Calu3 (cell line): ENCODE measurements at regions of chr3 and their contacts with region 1.

Region 1: DNA sequence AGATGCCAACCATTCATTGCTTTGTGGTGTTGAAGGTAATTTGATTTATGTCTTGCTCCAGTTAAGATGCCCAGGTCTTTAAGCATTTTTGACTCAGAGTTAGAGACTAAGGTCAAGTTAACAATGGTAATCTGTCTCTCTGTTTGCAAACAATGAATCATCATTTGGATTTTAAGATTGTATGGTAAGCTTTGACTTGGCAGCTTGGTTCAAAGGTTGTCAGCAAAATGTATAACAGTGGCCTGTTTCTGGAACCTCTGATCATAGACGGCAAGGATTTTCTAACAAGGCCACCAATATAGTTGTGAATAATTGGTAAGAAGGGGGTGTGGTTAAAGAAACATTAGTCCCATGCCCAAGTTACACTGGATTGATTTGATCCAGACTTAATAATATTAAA is 775.1 kb upstream of the GOLIM4 start:
- DNase-seq: peak; percentile 41
- H3K4me3 Mint-ChIP-seq: peak overlapping the region; percentile 20
- H3K27ac Mint-ChIP-seq: peak overlapping the region; percentile 78
- H3K4me1 Mint-ChIP-seq: peaks cover 86% of the 10 kb centered on the region
- H3K27me3 Mint-ChIP-seq: no peaks in the 10 kb centered on the region
- CTCF ChIP-seq: no peak

Region 2: DNA sequence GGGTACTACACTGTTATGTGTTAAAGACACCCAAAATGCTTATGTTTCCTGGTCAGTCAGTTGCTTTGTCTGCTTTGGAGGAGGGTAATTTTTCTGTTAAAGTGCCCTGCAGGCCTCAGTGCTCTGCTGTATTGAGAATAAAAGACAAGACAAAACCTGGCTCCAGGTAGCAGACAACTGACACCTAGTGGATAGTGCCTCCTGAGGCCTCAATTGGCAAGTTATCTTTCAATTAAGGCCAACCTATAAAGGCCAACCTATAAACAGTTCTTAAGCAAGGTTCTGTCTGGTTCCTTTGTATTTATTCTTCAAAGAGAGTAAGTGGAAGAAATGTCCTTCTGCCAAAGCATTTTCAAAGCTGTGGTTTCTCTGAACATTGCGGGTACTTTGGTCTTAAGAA is 18.8 kb after region 1 on chr3:
- CTCF ChIA-PET with region 1: interaction called, 3 read pairs
- intact Hi-C with region 1: loop called (anchors 2 kb)
- DNase-seq: peak; percentile 35
- H3K4me3 Mint-ChIP-seq: no peak overlapping the region
- H3K27ac Mint-ChIP-seq: no peak overlapping the region
- H3K4me1 Mint-ChIP-seq: peaks cover 14% of the 10 kb centered on the region
- H3K27me3 Mint-ChIP-seq: no peaks in the 10 kb centered on the region
- CTCF ChIP-seq: peak; percentile 55

Region 3: DNA sequence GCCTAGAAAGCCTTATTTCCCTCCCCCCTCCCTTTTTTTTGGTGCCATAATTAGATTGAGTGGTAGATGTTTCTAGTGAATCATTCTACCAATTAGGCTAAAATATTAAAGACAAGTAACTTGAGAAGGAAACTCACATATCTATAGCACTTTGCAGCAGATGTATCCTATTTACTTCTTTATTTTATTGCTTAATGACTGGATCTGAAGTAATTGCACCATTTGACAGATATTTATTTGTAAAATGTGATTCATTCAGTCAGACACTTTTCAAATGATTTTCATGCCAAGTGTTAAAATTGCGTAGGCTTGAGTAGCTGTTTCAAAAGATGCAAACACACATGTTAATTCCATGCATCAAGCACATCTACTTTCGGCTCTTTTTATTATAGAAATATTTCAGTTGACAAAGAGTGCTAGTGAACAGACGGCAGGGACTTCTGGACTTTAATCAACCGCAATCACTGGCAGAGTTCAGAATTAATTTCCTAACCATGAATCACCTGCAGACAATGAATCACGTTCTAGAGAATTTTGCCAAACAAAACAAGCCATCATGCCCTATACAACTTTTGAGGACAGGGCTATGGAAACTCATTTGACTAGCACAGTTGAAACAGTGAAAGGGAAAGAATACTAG is 155.8 kb after region 1 on chr3:
- CTCF ChIA-PET with region 1: no interaction called
- intact Hi-C with region 1: loop called (anchors 5 kb)
- DNase-seq: peak; percentile 60
- H3K4me3 Mint-ChIP-seq: peak overlapping the region; percentile 27
- H3K27ac Mint-ChIP-seq: peak overlapping the region; percentile 63
- H3K4me1 Mint-ChIP-seq: peaks cover 13% of the 10 kb centered on the region
- H3K27me3 Mint-ChIP-seq: no peaks in the 10 kb centered on the region
- CTCF ChIP-seq: no peak